ENCODE measurements at regions of chr3 and their contacts with region 1.

Region 1: GRCh38 chr3:139427283-139427993 is 38.0 kb upstream of the COPB2 start:
- DNase-seq: peak; percentile 92
- H3K4me3 ChIP-seq: no peak overlapping the region
- H3K27ac ChIP-seq: no peak overlapping the region
- H3K4me1 ChIP-seq: no peaks in the 10 kb centered on the region
- H3K27me3 ChIP-seq: no peaks in the 10 kb centered on the region
- CTCF ChIP-seq: peak; percentile 88

Region 2: DNA sequence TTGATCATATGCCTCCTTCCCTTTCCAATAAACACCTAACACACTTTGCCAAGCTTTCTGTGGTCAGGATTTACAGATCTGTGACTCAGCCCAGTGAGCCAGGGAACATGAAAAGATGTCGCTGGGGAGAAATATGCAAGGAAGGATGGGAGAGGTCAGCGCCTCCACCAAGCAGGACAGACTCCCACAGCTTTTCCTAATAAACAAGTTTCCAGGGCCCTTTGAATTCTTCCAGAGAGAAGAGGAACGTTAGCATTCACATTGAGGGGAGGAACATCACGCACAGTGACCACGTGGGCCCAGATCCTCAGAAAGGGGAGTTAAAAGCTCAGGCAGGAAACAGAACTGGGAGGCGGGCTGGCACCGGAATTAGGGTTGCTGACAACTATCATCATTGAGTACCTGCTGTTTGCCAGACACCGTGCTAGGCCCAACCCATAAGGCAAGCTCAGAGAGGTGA is 116.9 kb before region 1 on chr3:
- CTCF ChIA-PET with region 1: no interaction called
- POLR2A ChIA-PET with region 1: no interaction called
- intact Hi-C with region 1: no loop called
- DNase-seq: no peak
- H3K4me3 ChIP-seq: no peak overlapping the region
- H3K27ac ChIP-seq: no peak overlapping the region
- H3K4me1 ChIP-seq: no peaks in the 10 kb centered on the region
- H3K27me3 ChIP-seq: no peaks in the 10 kb centered on the region
- CTCF ChIP-seq: no peak

Region 3: GRCh38 chr3:139561959-139562676 is 134.7 kb after region 1 on chr3:
- CTCF ChIA-PET with region 1: interaction called, 5 read pairs
- POLR2A ChIA-PET with region 1: no interaction called
- intact Hi-C with region 1: loop called (anchors 1 kb)
- DNase-seq: no peak
- H3K4me3 ChIP-seq: no peak overlapping the region
- H3K27ac ChIP-seq: no peak overlapping the region
- H3K4me1 ChIP-seq: no peaks in the 10 kb centered on the region
- H3K27me3 ChIP-seq: no peaks in the 10 kb centered on the region
- CTCF ChIP-seq: peak; percentile 77

Region 4: DNA sequence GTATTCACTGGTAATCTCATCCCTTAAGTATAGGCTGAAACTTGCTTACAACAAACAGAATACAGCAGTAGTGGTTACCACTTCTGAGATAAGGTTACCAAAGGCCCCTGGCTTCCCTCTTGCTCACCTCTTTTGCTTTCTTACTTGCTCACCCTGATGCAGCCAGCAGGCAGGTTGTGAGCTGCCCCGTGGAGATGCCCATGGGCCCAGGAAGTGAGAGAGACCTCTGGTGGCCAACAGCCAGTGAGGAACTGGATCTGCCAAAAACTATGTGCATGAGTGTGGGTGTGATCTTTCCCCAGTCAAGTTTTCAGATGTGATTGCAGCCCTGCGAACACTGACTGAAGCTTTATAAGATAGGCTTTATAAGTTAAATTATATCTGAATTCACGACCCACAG is 201.6 kb after region 1 on chr3:
- CTCF ChIA-PET with region 1: no interaction called
- POLR2A ChIA-PET with region 1: no interaction called
- intact Hi-C with region 1: loop called (anchors 5 kb)
- DNase-seq: peak; percentile 63
- H3K4me3 ChIP-seq: no peak overlapping the region
- H3K27ac ChIP-seq: no peak overlapping the region
- H3K4me1 ChIP-seq: no peaks in the 10 kb centered on the region
- H3K27me3 ChIP-seq: no peaks in the 10 kb centered on the region
- CTCF ChIP-seq: peak; percentile 65

Region 5: GRCh38 chr3:139935016-139935865 is 507.8 kb after region 1 on chr3 and contains the start of gene CLSTN2:
- CTCF ChIA-PET with region 1: no interaction called
- POLR2A ChIA-PET with region 1: no interaction called
- intact Hi-C with region 1: loop called (anchors 2 kb)
- DNase-seq: peak; percentile 82
- H3K4me3 ChIP-seq: peak within 1 kb of the TSS; percentile 64
- H3K27ac ChIP-seq: peak within 1 kb of the TSS; percentile 26
- H3K4me1 ChIP-seq: peaks cover 14% of the 10 kb centered on the region
- H3K27me3 ChIP-seq: peaks cover 26% of the 10 kb centered on the region
- CTCF ChIP-seq: no peak
- total RNA-seq, gene CLSTN2: 41.0 and 50.7 TPM in 2 replicates

Region 6: DNA sequence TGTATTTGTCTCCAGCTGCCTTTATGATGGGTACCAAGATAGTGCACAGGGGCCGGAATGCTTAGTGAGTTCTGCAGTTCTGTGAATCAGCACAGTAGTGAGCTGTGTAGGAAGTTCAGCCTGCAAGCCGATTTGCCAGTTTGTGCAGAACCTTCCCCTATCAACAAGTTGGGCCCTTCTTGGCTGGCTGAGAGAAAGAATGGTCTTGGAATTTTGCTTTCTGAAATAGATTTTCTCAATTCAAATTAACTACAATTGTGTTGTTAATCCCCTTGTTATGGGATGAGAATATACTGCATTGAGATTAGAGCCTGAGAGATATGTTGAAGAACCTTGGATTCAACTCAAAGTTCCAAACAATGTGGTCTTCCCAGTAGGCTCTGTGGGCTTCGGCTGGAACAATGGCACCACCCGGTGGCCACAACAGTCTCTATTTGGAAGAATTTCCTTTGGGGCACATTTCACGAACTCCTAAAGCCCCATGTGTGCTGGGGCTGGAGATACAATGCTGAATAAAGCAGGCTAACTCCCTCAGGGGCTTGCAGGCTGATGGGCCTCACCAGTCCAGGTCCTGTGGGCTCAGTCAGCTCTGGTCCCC is 1309.5 kb after region 1 on chr3:
- CTCF ChIA-PET with region 1: no interaction called
- POLR2A ChIA-PET with region 1: no interaction called
- intact Hi-C with region 1: loop called (anchors 5 kb)
- DNase-seq: peak; percentile 76
- H3K4me3 ChIP-seq: no peak overlapping the region
- H3K27ac ChIP-seq: no peak overlapping the region
- H3K4me1 ChIP-seq: no peaks in the 10 kb centered on the region
- H3K27me3 ChIP-seq: no peaks in the 10 kb centered on the region
- CTCF ChIP-seq: peak; percentile 63

Region 7: DNA sequence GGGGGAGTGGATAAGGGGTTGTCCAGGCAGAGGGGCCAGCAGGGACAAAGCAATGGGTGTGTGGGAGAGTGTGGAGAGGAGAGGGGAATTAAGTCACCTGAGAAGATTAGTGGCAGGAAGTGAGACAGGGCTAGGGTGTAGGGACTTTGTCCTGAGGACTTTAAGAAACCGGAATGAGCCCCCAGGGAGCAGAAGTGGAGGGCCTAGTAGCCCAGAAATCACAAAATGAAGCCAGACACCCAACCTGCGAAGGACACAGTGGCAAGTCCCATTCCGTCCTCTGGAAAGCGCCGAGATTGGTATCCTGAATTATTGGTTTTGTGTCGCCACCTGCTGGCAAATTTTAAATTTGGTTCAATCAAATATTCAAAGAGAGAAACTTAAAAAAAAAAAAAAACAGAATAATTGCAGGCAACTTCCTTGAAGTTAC is 1436.2 kb after region 1 on chr3:
- CTCF ChIA-PET with region 1: no interaction called
- POLR2A ChIA-PET with region 1: no interaction called
- intact Hi-C with region 1: loop called (anchors 2 kb)
- DNase-seq: peak; percentile 82
- H3K4me3 ChIP-seq: no peak overlapping the region
- H3K27ac ChIP-seq: no peak overlapping the region
- H3K4me1 ChIP-seq: no peaks in the 10 kb centered on the region
- H3K27me3 ChIP-seq: no peaks in the 10 kb centered on the region
- CTCF ChIP-seq: peak; percentile 67

Measured in A673 (cell line).